Gastrocnemius medialis (tissue), 4 donors: ENCODE measurements at regions of chr1 and their contacts with region 1.

Region 1: GRCh38 chr1:222465211-222466041 is 82.5 kb downstream of the HHIPL2 start:
- DNase-seq: peak; percentile 70 to 84
- ATAC-seq: peak; percentile 94 to 96
- H3K4me3 ChIP-seq: peak overlapping the region; percentile 48 to 60 (median 54)
- H3K27ac ChIP-seq: peak overlapping the region; percentile 69 to 86 (median 82)
- H3K4me1 ChIP-seq: peaks cover 0 to 4% of the 10 kb centered on the region in 2 donors
- H3K27me3 ChIP-seq: no peaks in the 10 kb centered on the region
- CTCF ChIP-seq: peak; percentile 89 to 100 (median 100)
- POLR2A ChIP-seq: peak in 1 of 2 donors; percentile 13

Region 2: DNA sequence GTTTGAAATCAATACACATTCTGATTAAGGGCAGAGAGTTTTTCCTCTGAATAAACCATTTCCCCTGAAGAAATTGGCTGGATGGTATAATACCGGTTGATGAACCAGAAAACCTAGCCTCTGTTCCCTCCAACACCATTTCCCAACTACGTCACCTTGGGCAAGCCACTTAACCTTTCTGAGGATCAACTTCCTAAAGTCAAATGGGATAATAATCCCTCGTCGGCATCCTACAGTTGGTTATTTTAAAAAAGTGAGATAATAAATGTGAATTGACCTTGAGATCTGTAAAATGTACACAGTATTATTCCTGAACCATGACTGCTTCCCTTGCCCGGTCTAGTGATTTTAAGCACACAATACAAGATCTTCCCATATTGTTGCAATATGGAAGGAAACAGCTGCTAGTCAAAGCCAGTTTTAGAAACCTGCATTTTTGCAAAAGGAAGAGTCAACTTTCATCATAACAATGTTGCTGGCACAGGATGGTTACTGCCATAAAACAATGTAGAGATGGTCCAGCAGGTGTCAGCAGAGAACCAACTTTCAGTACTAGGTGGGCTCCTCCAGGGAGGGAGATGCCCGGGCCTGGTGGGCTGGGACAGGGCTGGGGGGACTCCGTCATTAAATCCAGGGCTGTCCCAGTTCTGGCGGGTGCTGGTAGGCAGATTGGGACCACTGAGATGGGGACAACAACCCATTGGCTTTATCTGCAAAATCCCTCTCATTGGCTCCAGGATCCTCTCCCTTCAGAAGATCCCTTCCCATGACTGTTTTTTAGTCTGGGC is 1591.4 kb before region 1 on chr1:
- in situ Hi-C with region 1: loop called in 1 of 4 experiments (anchors 25 kb)
- intact Hi-C with region 1: loop called (anchors 10 kb)
- DNase-seq: no peak
- ATAC-seq: peak; percentile 21 to 32
- H3K4me3 ChIP-seq: no peak overlapping the region
- H3K27ac ChIP-seq: peak overlapping the region in 1 of 4 donors; percentile 5
- H3K4me1 ChIP-seq: peaks cover 8 to 17% of the 10 kb centered on the region in 2 donors
- H3K27me3 ChIP-seq: no peaks in the 10 kb centered on the region
- CTCF ChIP-seq: peak; percentile 54 to 75 (median 70)
- POLR2A ChIP-seq: no peak

Region 3: DNA sequence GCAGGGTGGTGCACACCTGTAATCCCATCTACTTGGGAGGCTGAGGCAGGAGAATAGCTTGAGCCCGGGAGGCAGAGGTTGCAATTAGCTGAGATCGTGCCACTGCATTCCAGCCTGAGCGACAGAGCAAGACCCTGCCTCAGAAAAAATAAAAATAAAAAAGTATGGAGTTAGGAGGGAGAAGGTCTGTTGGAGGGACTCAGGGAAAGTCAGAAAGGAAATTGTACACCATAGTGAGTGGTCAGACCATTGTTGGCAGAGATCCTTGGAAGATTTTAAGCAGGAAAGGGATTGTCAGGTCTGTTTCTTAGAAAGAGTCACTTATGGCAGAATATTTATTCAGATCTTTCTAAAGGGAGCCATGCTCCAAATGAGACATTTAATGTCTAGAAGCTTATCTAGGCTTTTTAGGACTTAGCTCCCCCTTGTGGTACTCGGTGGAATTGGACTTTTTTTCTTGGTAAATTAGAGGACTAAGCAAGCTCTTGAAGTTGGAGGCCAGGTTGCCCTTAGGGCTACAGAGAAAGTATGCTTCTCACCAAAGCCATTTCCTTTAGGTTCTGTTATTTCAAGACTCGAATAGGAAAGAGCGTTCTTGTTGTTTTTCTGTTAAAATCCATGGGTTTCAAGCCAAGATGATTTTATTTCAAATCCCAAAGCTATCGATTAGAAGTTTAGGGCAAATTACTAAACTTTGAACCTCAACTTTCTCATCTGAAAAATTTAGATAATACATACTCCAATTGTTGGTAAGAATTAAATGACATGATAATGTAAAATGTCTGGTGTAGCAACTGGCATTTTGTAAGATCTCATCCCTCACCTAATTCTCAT is 169.0 kb after region 1 on chr1:
- in situ Hi-C with region 1: loop called (anchors 5 to 10 kb)
- intact Hi-C with region 1: loop called (anchors 1 kb)
- DNase-seq: peak in 1 of 2 donors; percentile 55
- ATAC-seq: peak; percentile 90 to 95
- H3K4me3 ChIP-seq: no peak overlapping the region
- H3K27ac ChIP-seq: no peak overlapping the region
- H3K4me1 ChIP-seq: no peaks in the 10 kb centered on the region
- H3K27me3 ChIP-seq: no peaks in the 10 kb centered on the region
- CTCF ChIP-seq: peak; percentile 71 to 89 (median 77)
- POLR2A ChIP-seq: no peak

Region 4: DNA sequence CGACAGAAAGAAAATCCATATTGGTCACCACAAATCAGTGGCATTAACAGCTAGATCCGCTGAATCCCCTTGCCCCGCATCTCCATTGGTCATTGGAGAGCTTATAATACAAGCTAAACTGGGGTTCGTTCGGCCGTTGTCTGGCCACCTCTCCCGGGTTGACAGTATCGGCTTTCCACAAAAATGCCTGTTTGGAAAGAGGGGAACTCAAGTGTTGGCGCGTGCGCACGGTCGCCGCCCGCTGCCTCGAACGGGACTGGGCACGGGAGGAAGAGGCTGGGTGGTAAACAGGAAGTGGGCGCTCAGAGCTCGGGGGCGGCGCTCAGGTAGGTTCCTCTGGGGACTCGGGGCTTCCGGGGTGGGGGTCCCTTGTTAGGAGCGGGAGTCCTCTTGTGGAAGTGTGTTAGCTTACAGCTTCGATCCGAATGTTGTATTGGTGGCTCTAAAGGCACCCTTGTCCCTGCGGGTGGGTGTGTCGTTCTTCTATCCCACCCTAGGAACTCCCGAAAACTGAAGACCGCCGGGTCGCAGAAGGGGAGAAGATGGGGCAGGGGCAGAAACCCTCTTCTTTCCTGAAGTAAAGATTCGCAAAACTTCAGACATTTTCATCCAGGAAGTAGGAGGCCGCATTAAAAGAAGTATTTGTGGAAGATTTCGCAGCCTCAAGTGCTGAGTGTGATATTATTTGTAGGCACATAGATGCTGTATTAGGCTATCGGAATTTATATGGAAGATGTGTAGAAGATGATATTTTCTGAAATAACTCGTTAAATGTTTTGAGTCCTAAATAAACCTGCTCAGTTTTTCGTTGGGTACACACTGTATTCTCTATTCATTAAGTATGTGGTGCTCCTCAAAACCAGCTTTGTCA is 247.9 kb after region 1 on chr1:
- in situ Hi-C with region 1: no loop called
- intact Hi-C with region 1: loop called (anchors 5 kb)
- DNase-seq: peak; percentile 93
- ATAC-seq: peak; percentile 84 to 88
- H3K4me3 ChIP-seq: peak overlapping the region; percentile 84 to 98 (median 90)
- H3K27ac ChIP-seq: peak overlapping the region; percentile 96 to 99 (median 98)
- H3K4me1 ChIP-seq: peaks cover 26 to 36% of the 10 kb centered on the region in 2 donors
- H3K27me3 ChIP-seq: no peaks in the 10 kb centered on the region
- CTCF ChIP-seq: no peak
- POLR2A ChIP-seq: peak; percentile 21 to 53

Region 5: GRCh38 chr1:223081181-223081994 is 616.0 kb after region 1 on chr1:
- in situ Hi-C with region 1: loop called in 1 of 4 experiments (anchors 25 kb)
- intact Hi-C with region 1: no loop called
- DNase-seq: peak; percentile 60 to 72
- ATAC-seq: peak; percentile 85 to 95
- H3K4me3 ChIP-seq: peak overlapping the region; percentile 36 to 77 (median 48)
- H3K27ac ChIP-seq: peak overlapping the region; percentile 29 to 61 (median 46)
- H3K4me1 ChIP-seq: no peaks in the 10 kb centered on the region
- H3K27me3 ChIP-seq: no peaks in the 10 kb centered on the region
- CTCF ChIP-seq: peak; percentile 92 to 98 (median 96)
- POLR2A ChIP-seq: no peak